Endothelial cell of umbilical vein (primary cell): ENCODE measurements at regions of chr17 and their contacts with region 1.

Region 1: DNA sequence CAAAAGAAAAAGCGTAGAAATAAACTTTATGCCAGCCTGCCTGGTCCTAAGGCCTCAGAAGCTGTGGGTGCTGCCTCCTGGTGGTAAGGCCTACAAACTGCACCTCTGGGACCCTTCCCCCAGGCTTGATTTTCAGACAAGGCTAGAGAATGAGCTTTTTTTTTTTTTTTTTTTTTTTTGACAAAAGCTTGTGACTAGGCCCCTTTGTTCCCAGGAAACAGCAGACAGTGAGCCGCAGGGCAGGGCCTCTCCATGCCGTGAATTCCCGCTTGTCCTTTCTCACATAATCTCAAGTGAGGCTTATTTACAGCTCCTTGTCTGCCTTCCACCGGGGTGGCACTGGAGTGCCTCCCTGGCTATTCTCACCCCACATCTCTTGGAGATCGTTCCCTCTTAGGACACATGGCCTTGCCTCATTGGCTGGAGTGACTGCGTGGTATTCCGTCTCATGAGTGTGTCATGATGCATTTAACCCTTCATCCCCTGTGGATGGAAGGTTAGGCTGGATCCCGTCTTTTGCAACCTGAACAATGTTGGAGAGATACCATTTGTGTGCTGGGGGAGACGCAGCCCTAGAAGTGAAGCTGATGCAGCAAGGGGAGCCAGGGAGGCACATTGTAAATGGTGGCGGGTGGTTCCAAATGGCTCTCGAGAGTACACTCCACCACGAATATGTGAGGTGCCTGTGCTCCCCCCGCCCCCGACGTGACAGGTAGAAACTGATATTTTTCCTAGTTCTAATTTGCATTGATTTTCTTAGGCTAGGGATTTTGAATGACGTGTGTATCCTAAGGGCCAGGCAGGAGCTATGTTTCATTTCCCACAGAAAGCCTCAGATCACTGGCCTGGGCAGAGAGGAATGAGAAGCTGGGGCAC is 49.6 kb downstream of the USP22 start:
- DNase-seq: peak; percentile 87
- H3K4me3 ChIP-seq: no peak overlapping the region
- H3K27ac ChIP-seq: no peak overlapping the region
- H3K4me1 ChIP-seq: no peaks in the 10 kb centered on the region
- H3K27me3 ChIP-seq: no peaks in the 10 kb centered on the region
- CTCF ChIP-seq: peak; percentile 95 to 96
- POLR2A ChIP-seq: no peak

Region 2: GRCh38 chr17:20797292-20797691 is 195.9 kb before region 1 on chr17:
- CTCF ChIA-PET with region 1: interaction called, 157 read pairs
- POLR2A ChIA-PET with region 1: no interaction called
- dilution Hi-C with region 1: no loop called
- intact Hi-C with region 1: loop called (anchors 1 kb)
- DNase-seq: no peak
- H3K4me3 ChIP-seq: no peak overlapping the region
- H3K27ac ChIP-seq: no peak overlapping the region
- H3K4me1 ChIP-seq: no peaks in the 10 kb centered on the region
- H3K27me3 ChIP-seq: no peaks in the 10 kb centered on the region
- CTCF ChIP-seq: no peak
- POLR2A ChIP-seq: no peak

Region 3: DNA sequence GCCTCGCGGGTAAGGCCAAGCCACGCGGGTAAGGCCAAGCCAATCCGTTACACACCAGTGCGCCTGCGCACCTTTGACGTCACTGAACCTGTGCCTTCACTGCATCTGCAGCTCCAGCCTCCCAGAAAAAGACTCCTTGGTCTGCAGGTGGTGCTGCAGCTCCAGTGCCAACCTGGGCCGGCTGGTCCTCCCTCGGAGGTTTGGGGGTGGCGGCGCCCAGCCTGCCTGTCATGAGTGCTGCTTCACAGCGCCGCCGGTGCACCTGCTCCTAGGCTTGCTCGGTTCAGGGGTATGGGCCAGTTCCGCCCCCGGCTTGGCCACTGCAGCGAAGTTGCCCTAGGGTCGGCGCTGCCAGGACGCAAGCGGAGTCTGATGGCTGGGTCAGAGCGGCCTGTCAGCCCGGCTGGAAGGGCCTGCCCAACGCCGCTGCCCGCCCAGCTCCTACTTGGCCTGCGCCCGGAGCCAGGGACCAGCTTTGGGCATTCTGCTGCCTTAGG is 97.0 kb before region 1 on chr17:
- CTCF ChIA-PET with region 1: interaction called, 21 read pairs
- POLR2A ChIA-PET with region 1: no interaction called
- dilution Hi-C with region 1: no loop called
- intact Hi-C with region 1: loop called (anchors 1 kb)
- DNase-seq: peak; percentile 35
- H3K4me3 ChIP-seq: no peak overlapping the region
- H3K27ac ChIP-seq: no peak overlapping the region
- H3K4me1 ChIP-seq: no peaks in the 10 kb centered on the region
- H3K27me3 ChIP-seq: no peaks in the 10 kb centered on the region
- CTCF ChIP-seq: peak in 1 of 2 donors; percentile 17
- POLR2A ChIP-seq: no peak

Region 4: GRCh38 chr17:20935740-20936139 is 57.5 kb before region 1 on chr17:
- CTCF ChIA-PET with region 1: interaction called, 12 read pairs
- POLR2A ChIA-PET with region 1: no interaction called
- dilution Hi-C with region 1: no loop called
- intact Hi-C with region 1: loop called (anchors 5 kb)
- DNase-seq: peak; percentile 91
- H3K4me3 ChIP-seq: peak overlapping the region in 1 of 3 experiments; percentile 52
- H3K27ac ChIP-seq: peak overlapping the region; percentile 93
- H3K4me1 ChIP-seq: peaks cover 33% of the 10 kb centered on the region
- H3K27me3 ChIP-seq: no peaks in the 10 kb centered on the region
- CTCF ChIP-seq: no peak
- POLR2A ChIP-seq: no peak